Body of pancreas (tissue), 4 donors: ENCODE measurements at regions of chr7 and their contacts with region 1.

Region 1: GRCh38 chr7:39517240-39517639 is 49.0 kb upstream of the YAE1 start:
- DNase-seq: no peak
- ATAC-seq: no peak
- H3K4me3 ChIP-seq: no peak overlapping the region
- H3K27ac ChIP-seq: no peak overlapping the region
- H3K4me1 ChIP-seq: peaks cover 8% of the 10 kb centered on the region
- H3K27me3 ChIP-seq: no peaks in the 10 kb centered on the region
- CTCF ChIP-seq: no peak
- POLR2A ChIP-seq: no peak

Region 2: DNA sequence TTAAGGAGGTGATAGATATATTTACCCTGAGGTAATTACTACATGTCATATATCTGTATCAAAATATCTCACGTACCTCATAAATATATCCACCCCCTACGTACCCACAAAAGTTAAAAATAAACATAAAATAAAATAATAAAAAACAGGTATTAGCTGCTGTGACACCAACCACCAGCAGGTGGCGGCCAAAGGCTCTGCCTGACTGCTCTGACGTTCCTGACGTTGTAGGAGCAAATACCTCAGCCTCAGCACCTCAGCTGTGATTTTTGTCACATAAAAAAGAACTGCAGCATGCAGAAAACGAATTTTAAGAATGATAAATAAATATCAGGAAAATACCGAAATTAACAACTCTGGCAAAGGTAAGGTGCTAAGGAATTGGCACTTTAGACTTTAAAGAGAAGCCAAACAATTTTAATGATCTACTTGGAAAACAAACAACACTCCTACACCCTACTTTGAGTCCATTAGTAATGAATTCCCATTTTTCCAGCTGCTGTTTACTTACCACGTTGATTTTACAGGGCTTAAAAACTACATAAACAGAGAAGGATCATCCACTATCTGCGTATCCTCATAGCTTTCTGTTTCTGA is 1118.4 kb before region 1 on chr7:
- intact Hi-C with region 1: loop called (anchors 5 kb)
- DNase-seq: peak; percentile 45 to 67 (median 57)
- ATAC-seq: peak; percentile 78
- H3K4me3 ChIP-seq: no peak overlapping the region
- H3K27ac ChIP-seq: no peak overlapping the region
- H3K4me1 ChIP-seq: no peaks in the 10 kb centered on the region
- H3K27me3 ChIP-seq: no peaks in the 10 kb centered on the region
- CTCF ChIP-seq: peak; percentile 67 to 96 (median 87)
- POLR2A ChIP-seq: no peak